ENCODE measurements at regions of chr2 and their contacts with region 1.

Region 1: DNA sequence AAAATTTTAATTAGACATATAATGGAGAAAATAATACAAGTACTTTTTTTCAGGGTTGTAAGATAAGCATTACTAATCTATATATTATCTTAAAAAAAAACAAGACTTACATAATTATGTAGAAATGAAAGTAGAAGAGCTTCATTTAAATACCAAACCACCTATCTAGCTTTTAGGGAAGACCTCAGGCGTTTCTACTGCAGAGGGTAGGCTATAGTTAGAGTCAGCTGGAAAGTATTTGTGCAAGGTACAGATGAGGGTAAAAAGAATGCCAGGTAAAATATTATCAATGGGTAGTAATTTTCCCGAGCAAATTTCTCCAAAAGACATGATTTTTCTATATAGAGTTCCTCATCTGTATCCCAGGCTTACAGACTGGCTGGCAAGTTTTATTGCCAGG is 30.5 kb upstream of the SLC39A10 start:
- DNase-seq: no peak
- ATAC-seq: no peak
- H3K4me3 ChIP-seq: no peak overlapping the region
- H3K4me3 Mint-ChIP-seq: no peak overlapping the region
- H3K27ac ChIP-seq: peak overlapping the region in 1 of 2 donors; percentile 59
- H3K27ac Mint-ChIP-seq: no peak overlapping the region
- H3K4me1 ChIP-seq: peaks cover 4 to 8% of the 10 kb centered on the region in 2 donors
- H3K4me1 Mint-ChIP-seq: peaks cover 14% of the 10 kb centered on the region
- H3K27me3 ChIP-seq: no peaks in the 10 kb centered on the region
- H3K27me3 Mint-ChIP-seq: no peaks in the 10 kb centered on the region
- CTCF ChIP-seq: no peak

Region 2: GRCh38 chr2:195410074-195410671 is 216.3 kb before region 1 on chr2:
- CTCF ChIA-PET with region 1: no interaction called
- POLR2A ChIA-PET with region 1: no interaction called
- intact Hi-C with region 1: no loop called
- DNase-seq: no peak
- ATAC-seq: no peak
- H3K4me3 ChIP-seq: no peak overlapping the region
- H3K4me3 Mint-ChIP-seq: no peak overlapping the region
- H3K27ac ChIP-seq: no peak overlapping the region
- H3K27ac Mint-ChIP-seq: no peak overlapping the region
- H3K4me1 ChIP-seq: peaks cover 12 to 13% of the 10 kb centered on the region in 2 donors
- H3K4me1 Mint-ChIP-seq: peaks cover 16% of the 10 kb centered on the region
- H3K27me3 ChIP-seq: no peaks in the 10 kb centered on the region
- H3K27me3 Mint-ChIP-seq: no peaks in the 10 kb centered on the region
- CTCF ChIP-seq: no peak

Region 3: DNA sequence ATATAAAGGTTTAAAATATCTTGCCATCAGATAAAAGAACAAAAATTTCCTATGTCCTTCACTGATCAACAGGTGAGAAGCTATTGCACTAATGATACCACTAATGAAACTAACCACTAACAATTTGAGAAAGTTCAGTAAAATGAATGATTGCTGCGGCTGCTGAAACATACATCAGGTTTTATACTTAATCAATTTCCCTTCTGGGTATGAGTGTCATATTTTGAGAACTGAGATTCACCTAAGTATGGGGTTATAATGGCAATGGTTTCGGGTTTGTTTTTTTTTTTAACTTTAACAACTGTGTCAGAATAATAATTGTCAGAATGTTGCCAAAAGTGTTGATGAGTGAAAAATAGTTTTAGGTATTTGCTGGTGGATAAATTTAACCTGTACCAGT is 120.8 kb before region 1 on chr2:
- CTCF ChIA-PET with region 1: no interaction called
- POLR2A ChIA-PET with region 1: no interaction called
- intact Hi-C with region 1: no loop called
- DNase-seq: no peak
- ATAC-seq: no peak
- H3K4me3 ChIP-seq: no peak overlapping the region
- H3K4me3 Mint-ChIP-seq: no peak overlapping the region
- H3K27ac ChIP-seq: no peak overlapping the region
- H3K27ac Mint-ChIP-seq: no peak overlapping the region
- H3K4me1 ChIP-seq: peaks cover under 1 to 5% of the 10 kb centered on the region in 2 donors
- H3K4me1 Mint-ChIP-seq: peaks cover 9% of the 10 kb centered on the region
- H3K27me3 ChIP-seq: no peaks in the 10 kb centered on the region
- H3K27me3 Mint-ChIP-seq: no peaks in the 10 kb centered on the region
- CTCF ChIP-seq: no peak

Region 4: GRCh38 chr2:195594248-195594647 is 32.3 kb before region 1 on chr2:
- CTCF ChIA-PET with region 1: no interaction called
- POLR2A ChIA-PET with region 1: no interaction called
- intact Hi-C with region 1: loop called (anchors 5 kb)
- DNase-seq: peak; percentile 25
- ATAC-seq: no peak
- H3K4me3 ChIP-seq: no peak overlapping the region
- H3K4me3 Mint-ChIP-seq: peak overlapping the region; percentile 1
- H3K27ac ChIP-seq: no peak overlapping the region
- H3K27ac Mint-ChIP-seq: peak overlapping the region; percentile 2
- H3K4me1 ChIP-seq: peaks cover 12 to 21% of the 10 kb centered on the region in 2 donors
- H3K4me1 Mint-ChIP-seq: peaks cover 31% of the 10 kb centered on the region
- H3K27me3 ChIP-seq: no peaks in the 10 kb centered on the region
- H3K27me3 Mint-ChIP-seq: no peaks in the 10 kb centered on the region
- CTCF ChIP-seq: no peak